ENCODE measurements at regions of chr10 and their contacts with region 1.

Region 1: DNA sequence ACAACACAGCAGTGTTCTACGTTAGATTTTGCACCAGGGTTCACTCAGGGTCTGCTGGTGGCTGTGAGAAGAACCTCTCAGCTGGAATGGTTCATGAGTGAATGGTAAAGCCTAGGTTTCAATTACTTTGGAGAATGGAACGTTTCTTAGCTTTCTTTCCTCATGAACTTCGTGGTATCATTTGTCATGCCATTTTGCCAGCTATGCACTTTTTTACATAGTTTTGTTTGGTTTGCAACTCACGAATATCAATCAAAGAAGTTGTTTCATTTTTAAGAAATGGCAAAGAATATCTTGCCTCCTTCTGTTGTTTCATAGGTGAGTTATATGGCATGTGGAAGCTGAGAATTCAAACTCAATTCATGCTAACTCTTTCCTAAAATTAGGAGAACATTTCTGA is 34.1 kb upstream of the RAB11FIP2 start:
- DNase-seq: no peak

Region 2: DNA sequence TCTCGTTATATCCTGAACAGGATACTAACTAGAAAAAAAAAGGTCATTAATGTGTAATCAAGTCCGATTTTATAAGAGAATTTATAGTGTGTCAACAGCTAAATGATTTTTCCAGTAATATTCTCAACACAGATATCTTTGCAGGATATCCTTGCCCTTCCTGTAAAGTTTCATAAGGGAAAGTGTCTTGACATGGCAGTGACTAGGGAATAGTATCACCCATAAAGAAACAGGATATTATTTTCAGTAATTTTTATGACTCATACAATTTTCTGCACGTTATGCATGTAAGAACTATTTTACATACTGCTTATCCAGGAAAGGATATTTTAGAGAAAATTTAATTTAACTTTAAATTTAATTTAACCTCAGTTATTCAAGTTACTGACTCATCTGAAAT is 1554.6 kb before region 1 on chr10:
- intact Hi-C with region 1: loop called in 1 of 2 experiments (anchors 5 kb)
- DNase-seq: no peak